ENCODE measurements at regions of chr6 and their contacts with region 1.

Region 1: GRCh38 chr6:30717042-30717844 is at the start of gene MDC1:
- DNase-seq: peak; percentile 100
- ATAC-seq: peak; percentile 70
- H3K4me3 ChIP-seq: peak within 1 kb of the TSS; percentile 71 to 82 (median 80)
- H3K4me3 Mint-ChIP-seq: peak within 1 kb of the TSS; percentile 96
- H3K27ac ChIP-seq: peak within 1 kb of the TSS; percentile 91 to 94
- H3K27ac Mint-ChIP-seq: peak within 1 kb of the TSS; percentile 99
- H3K4me1 ChIP-seq: peaks cover 23 to 33% of the 10 kb centered on the region in 2 donors
- H3K4me1 Mint-ChIP-seq: peaks cover 40% of the 10 kb centered on the region
- H3K27me3 ChIP-seq: no peaks in the 10 kb centered on the region
- H3K27me3 Mint-ChIP-seq: no peaks in the 10 kb centered on the region
- CTCF ChIP-seq: peak; percentile 50
- total RNA-seq, gene MDC1: 69.3 and 87.4 TPM in 2 replicates

Region 2: GRCh38 chr6:30483677-30484279 is 233.5 kb before region 1 on chr6:
- CTCF ChIA-PET with region 1: interaction called, 51 read pairs
- POLR2A ChIA-PET with region 1: interaction called, 3 read pairs
- intact Hi-C with region 1: no loop called
- DNase-seq: peak; percentile 76
- ATAC-seq: peak; percentile 23
- H3K4me3 ChIP-seq: no peak overlapping the region
- H3K4me3 Mint-ChIP-seq: no peak overlapping the region
- H3K27ac ChIP-seq: no peak overlapping the region
- H3K27ac Mint-ChIP-seq: no peak overlapping the region
- H3K4me1 ChIP-seq: peaks cover 24 to 28% of the 10 kb centered on the region in 2 donors
- H3K4me1 Mint-ChIP-seq: peaks cover 33% of the 10 kb centered on the region
- H3K27me3 ChIP-seq: peaks cover 0 to 28% (median 21%) of the 10 kb centered on the region in 4 experiments
- H3K27me3 Mint-ChIP-seq: peaks cover 33% of the 10 kb centered on the region
- CTCF ChIP-seq: peak; percentile 84

Region 3: GRCh38 chr6:30571075-30571768 is 146.0 kb before region 1 on chr6 and contains the start of gene ABCF1:
- CTCF ChIA-PET with region 1: interaction called, 3 read pairs
- POLR2A ChIA-PET with region 1: no interaction called
- intact Hi-C with region 1: loop called (anchors 1 kb)
- DNase-seq: peak; percentile 99
- ATAC-seq: peak; percentile 98
- H3K4me3 ChIP-seq: peak within 1 kb of the TSS; percentile 69 to 93 (median 87)
- H3K4me3 Mint-ChIP-seq: peak within 1 kb of the TSS; percentile 96
- H3K27ac ChIP-seq: peak within 1 kb of the TSS; percentile 82 to 92
- H3K27ac Mint-ChIP-seq: peak within 1 kb of the TSS; percentile 93
- H3K4me1 ChIP-seq: peaks cover 25 to 32% of the 10 kb centered on the region in 2 donors
- H3K4me1 Mint-ChIP-seq: peaks cover 54% of the 10 kb centered on the region
- H3K27me3 ChIP-seq: no peaks in the 10 kb centered on the region
- H3K27me3 Mint-ChIP-seq: no peaks in the 10 kb centered on the region
- CTCF ChIP-seq: no peak
- total RNA-seq, gene ABCF1: 60.9 and 63.7 TPM in 2 replicates

Region 4: GRCh38 chr6:30646458-30647241 is 70.6 kb before region 1 on chr6 and contains the start of gene C6orf136:
- CTCF ChIA-PET with region 1: interaction called, 5 read pairs
- POLR2A ChIA-PET with region 1: no interaction called
- intact Hi-C with region 1: loop called (anchors 1 kb)
- DNase-seq: peak; percentile 95
- ATAC-seq: peak; percentile 77
- H3K4me3 ChIP-seq: peak within 1 kb of the TSS; percentile 24 to 93 (median 80)
- H3K4me3 Mint-ChIP-seq: peak within 1 kb of the TSS; percentile 89
- H3K27ac ChIP-seq: peak within 1 kb of the TSS; percentile 76 to 89
- H3K27ac Mint-ChIP-seq: peak within 1 kb of the TSS; percentile 95
- H3K4me1 ChIP-seq: peaks cover 12 to 21% of the 10 kb centered on the region in 2 donors
- H3K4me1 Mint-ChIP-seq: peaks cover 28% of the 10 kb centered on the region
- H3K27me3 ChIP-seq: no peaks in the 10 kb centered on the region
- H3K27me3 Mint-ChIP-seq: no peaks in the 10 kb centered on the region
- CTCF ChIP-seq: no peak
- total RNA-seq, gene C6orf136: 24.9 and 37.2 TPM in 2 replicates

Region 5: GRCh38 chr6:30678964-30679726 is 38.1 kb before region 1 on chr6:
- CTCF ChIA-PET with region 1: interaction called, 963 read pairs
- POLR2A ChIA-PET with region 1: interaction called, 216 read pairs
- intact Hi-C with region 1: loop called (anchors 1 kb)
- DNase-seq: peak; percentile 92
- ATAC-seq: peak; percentile 29
- H3K4me3 ChIP-seq: peak overlapping the region in 4 of 5 experiments; percentile 31 to 100 (median 37)
- H3K4me3 Mint-ChIP-seq: peak overlapping the region; percentile 65
- H3K27ac ChIP-seq: peak overlapping the region in 1 of 2 donors; percentile 97
- H3K27ac Mint-ChIP-seq: peak overlapping the region; percentile 99
- H3K4me1 ChIP-seq: peaks cover 38 to 39% of the 10 kb centered on the region in 2 donors
- H3K4me1 Mint-ChIP-seq: peaks cover 51% of the 10 kb centered on the region
- H3K27me3 ChIP-seq: no peaks in the 10 kb centered on the region
- H3K27me3 Mint-ChIP-seq: no peaks in the 10 kb centered on the region
- CTCF ChIP-seq: peak; percentile 94

Region 6: DNA sequence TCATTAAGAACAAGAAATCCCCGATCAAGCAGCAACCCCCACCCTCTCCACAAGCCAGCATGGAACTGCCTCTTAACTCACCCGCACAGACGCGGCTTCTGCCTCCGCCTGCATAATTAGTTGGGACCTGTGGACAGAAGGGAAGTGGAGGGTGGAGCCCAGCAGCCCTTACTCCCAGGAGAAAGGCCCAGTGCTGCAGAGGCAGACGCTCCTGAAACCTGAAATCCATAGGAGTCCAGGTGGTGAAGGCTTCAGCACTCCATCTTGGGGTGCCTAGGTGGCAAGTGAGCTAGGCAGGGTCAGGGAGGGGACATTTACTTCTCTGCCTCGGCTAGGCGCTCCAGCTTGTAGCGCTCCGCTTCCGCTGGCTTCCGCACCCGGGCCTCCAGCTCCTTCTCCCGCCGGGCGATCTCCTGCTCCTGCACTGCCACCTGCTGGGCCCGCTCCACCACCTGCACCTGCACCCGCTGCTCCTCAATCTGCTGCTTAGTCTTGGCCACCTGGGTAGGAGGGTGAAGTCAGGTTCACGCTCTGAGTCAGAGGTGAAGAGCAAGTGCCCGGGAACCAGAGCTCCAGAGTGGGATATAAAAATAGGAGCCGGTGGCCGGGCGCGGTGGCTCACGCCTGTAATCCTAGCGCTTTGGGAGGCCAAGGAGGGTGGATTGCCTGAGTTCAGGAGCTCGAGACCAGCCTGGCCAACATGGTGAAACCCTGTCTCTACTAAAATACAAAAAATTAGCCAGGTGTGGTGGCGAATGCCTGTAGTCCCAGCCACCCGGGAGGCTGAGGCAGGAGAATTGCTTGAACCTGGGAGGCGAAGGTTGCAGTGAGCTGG is 13.6 kb after region 1 on chr6:
- CTCF ChIA-PET with region 1: interaction called, 71 read pairs
- POLR2A ChIA-PET with region 1: interaction called, 6 read pairs
- intact Hi-C with region 1: no loop called
- DNase-seq: peak; percentile 86
- ATAC-seq: peak; percentile 89
- H3K4me3 ChIP-seq: peak overlapping the region in 3 of 5 experiments; percentile 5 to 29 (median 25)
- H3K4me3 Mint-ChIP-seq: peak overlapping the region; percentile 40
- H3K27ac ChIP-seq: no peak overlapping the region
- H3K27ac Mint-ChIP-seq: peak overlapping the region; percentile 42
- H3K4me1 ChIP-seq: peaks cover 22 to 23% of the 10 kb centered on the region in 2 donors
- H3K4me1 Mint-ChIP-seq: peaks cover 25% of the 10 kb centered on the region
- H3K27me3 ChIP-seq: no peaks in the 10 kb centered on the region
- H3K27me3 Mint-ChIP-seq: no peaks in the 10 kb centered on the region
- CTCF ChIP-seq: peak; percentile 77

Region 7: DNA sequence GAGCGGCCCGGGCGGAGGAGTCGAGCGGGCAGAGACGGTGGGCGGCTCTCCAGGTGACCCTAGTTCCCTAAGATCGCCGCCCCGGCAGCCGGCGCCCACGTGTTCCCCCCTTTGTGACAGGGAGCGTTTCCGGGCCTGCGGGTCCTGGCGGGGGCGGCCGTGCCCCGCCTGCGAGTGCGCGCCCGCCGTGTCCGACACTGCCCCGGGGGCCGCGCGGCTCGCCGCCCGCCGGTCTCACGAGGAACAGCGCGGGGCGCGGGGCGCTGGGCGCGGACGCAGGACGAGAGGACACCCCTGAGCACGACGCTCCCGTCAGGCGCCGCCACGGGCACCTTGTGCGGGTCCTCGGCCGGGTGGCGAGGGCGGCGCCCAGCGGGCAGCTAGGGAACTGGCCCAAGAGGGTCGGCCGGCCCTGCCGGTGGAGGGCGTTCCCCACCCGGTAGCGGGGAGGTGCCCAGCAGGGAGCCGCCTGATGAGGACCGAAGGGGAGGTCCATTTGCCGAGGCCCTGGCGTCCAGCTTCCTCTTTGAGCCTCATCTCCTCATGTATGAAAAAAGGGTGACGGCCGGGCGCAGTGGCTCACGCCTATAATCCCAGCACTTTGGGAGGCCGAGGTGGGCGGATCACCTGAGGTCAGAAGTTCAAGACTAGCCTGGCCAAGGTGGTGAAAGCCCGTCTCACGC is 1078.5 kb after region 1 on chr6 and contains the start of gene VARS1:
- CTCF ChIA-PET with region 1: no interaction called
- POLR2A ChIA-PET with region 1: interaction called, 12 read pairs
- intact Hi-C with region 1: no loop called
- DNase-seq: peak; percentile 96
- ATAC-seq: peak; percentile 91
- H3K4me3 ChIP-seq: peak within 1 kb of the TSS; percentile 72 to 96 (median 95)
- H3K4me3 Mint-ChIP-seq: peak within 1 kb of the TSS; percentile 97
- H3K27ac ChIP-seq: peak within 1 kb of the TSS; percentile 75 to 87
- H3K27ac Mint-ChIP-seq: peak within 1 kb of the TSS; percentile 99
- H3K4me1 ChIP-seq: peaks cover 45 to 59% of the 10 kb centered on the region in 2 donors
- H3K4me1 Mint-ChIP-seq: peaks cover 54% of the 10 kb centered on the region
- H3K27me3 ChIP-seq: no peaks in the 10 kb centered on the region
- H3K27me3 Mint-ChIP-seq: no peaks in the 10 kb centered on the region
- CTCF ChIP-seq: peak; percentile 79
- total RNA-seq, gene VARS1: 47.4 and 52.3 TPM in 2 replicates

Measured in B cell (primary cell).